ENCODE measurements at regions of chr19 and their contacts with region 1.

Region 1: DNA sequence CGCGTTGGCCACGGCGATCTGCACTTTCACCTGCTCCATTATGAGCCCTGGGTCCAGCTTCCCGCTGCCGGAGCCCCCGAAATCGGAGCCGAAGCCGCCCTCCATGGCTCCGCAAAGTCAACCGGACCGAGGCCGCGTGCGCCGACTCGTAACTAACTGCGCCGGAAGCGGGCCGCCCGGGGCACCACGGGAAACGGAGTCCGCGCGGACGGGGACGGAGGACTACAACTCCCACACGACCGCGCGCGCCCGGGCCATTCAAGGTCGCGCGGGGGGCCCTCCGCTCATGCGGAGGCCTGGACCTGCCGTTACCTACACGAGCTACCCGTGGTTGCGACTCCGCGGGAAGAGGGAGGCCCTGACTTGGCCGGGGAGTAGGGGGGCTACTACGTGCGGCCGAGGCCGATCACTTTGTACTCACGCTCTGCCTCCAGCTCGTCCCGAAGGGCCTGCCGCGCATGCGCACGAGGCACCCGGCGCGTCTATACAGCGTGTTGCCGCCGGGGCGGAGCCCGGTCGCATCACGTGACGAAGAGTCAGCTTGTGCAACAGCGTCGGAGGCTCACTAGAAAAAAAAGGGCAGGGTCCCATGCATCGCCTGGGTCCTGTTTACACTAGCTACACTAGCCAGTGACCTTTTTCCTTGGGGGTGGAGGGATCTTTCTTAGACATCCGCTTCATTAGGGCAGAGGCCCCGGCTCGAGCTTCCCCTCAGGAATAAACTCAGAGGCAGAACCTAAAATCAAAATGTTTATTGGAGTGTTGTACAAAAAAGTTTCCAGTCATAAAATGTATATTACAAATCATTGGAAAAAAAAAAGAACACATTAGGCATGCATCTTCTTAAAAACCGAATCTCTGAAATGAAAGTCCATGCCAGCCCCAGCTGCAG is at the start of gene TIMM13:
- DNase-seq: peak; percentile 97
- H3K4me3 Mint-ChIP-seq: peak within 1 kb of the TSS; percentile 90
- H3K27ac Mint-ChIP-seq: peak within 1 kb of the TSS; percentile 97
- H3K4me1 Mint-ChIP-seq: peaks cover 15% of the 10 kb centered on the region
- H3K27me3 Mint-ChIP-seq: no peaks in the 10 kb centered on the region
- total RNA-seq, gene TIMM13: 69.0 to 72.0 TPM

Region 2: GRCh38 chr19:2455851-2456570 is 28.3 kb after region 1 on chr19:
- CTCF ChIA-PET with region 1: no interaction called
- POLR2A ChIA-PET with region 1: interaction called, 11 read pairs
- intact Hi-C with region 1: loop called (anchors 5 kb)
- DNase-seq: peak; percentile 62
- H3K4me3 Mint-ChIP-seq: peak overlapping the region; percentile 83
- H3K27ac Mint-ChIP-seq: peak overlapping the region; percentile 82
- H3K4me1 Mint-ChIP-seq: peaks cover 18% of the 10 kb centered on the region
- H3K27me3 Mint-ChIP-seq: no peaks in the 10 kb centered on the region

Region 3: GRCh38 chr19:2461751-2462634 is 34.3 kb after region 1 on chr19:
- CTCF ChIA-PET with region 1: interaction called, 3 read pairs
- POLR2A ChIA-PET with region 1: interaction called, 11 read pairs
- intact Hi-C with region 1: loop called (anchors 5 kb)
- DNase-seq: peak; percentile 81
- H3K4me3 Mint-ChIP-seq: peak overlapping the region; percentile 92
- H3K27ac Mint-ChIP-seq: peak overlapping the region; percentile 68
- H3K4me1 Mint-ChIP-seq: peaks cover 7% of the 10 kb centered on the region
- H3K27me3 Mint-ChIP-seq: no peaks in the 10 kb centered on the region

Measured in activated CD4-positive, alpha-beta memory T cell treated with anti-CD3 and anti-CD28 coated beads for 36 hours (primary cell).